RWPE1 (cell line): ENCODE measurements at regions of chr18 and their contacts with region 1.

Region 1: DNA sequence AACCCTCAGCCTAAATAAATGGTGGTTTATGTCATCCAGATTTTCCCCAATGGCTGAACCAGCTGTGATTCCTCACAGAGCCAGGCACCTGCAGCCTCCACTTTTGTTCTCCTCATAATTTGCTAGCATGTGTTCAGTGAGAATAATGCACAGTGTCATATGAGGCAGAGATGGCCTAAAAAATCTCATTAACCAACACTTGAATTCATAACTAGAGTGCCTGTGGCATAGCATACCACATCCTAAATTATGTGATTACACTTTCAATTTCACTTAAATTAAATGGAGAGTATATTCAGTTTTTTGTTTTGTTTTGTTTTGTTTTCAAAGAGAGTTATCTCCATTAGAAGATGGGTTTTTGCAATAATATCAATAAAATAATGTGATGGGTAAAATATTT is 488.0 kb downstream of the CBLN2 start:
- DNase-seq: no peak
- H3K27ac ChIP-seq: no peak overlapping the region
- CTCF ChIP-seq: no peak

Region 2: DNA sequence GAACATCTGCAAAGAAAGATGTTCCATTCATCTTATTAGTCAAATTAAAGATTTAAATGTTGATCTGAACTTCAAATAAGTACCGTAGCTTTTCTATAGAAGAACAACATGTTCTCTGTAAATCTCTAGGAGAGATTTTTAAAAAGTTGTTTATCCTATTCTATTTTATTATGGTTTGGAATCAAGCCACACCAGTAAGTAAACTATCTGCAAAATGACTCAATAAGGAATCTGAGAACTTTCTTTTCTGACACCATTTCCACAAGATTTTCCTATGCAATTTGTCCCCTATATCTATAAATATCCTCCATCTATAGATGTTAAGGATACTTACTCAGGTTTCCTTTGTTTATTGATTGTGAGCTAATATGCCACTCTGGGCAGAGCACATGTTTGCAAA is 248.6 kb before region 1 on chr18:
- CTCF ChIA-PET with region 1: interaction called, 10 read pairs
- POLR2A ChIA-PET with region 1: no interaction called
- DNase-seq: no peak
- H3K27ac ChIP-seq: no peak overlapping the region
- CTCF ChIP-seq: no peak

Region 3: DNA sequence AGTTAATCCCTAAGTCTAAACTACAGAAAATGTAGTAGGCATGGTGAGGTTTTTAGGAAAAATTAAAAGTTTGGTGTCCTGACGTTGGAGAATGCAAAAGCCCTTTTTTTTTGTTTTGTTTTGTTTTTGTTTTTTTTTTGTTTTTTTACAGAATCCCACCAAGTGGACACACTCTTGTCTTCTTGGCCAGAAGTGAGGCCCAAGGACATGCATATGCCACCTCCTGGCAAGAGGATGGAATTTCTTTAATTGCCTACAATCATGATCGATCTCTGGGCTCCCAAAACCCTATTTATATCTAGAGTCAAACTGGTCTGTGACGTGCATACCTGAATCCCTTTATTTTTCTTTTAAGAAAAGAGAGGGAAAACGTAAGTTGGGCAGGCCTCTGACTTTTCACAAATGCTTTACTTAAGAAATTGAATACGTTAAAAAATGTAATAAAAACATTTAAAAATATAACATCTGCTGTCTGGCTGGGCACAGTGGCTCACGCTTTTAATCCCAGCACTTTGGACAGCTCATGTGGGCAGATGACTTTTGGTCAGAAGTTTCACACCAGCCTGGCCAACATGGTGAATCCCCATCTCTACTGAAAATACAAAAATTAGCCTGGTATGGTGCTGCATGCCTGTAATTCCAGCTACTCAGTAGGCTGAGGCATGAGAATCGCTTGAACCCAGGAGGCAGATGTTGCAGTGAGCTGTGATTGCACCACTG is 14.7 kb before region 1 on chr18:
- CTCF ChIA-PET with region 1: no interaction called
- POLR2A ChIA-PET with region 1: no interaction called
- DNase-seq: no peak
- H3K27ac ChIP-seq: no peak overlapping the region
- CTCF ChIP-seq: no peak

Region 4: DNA sequence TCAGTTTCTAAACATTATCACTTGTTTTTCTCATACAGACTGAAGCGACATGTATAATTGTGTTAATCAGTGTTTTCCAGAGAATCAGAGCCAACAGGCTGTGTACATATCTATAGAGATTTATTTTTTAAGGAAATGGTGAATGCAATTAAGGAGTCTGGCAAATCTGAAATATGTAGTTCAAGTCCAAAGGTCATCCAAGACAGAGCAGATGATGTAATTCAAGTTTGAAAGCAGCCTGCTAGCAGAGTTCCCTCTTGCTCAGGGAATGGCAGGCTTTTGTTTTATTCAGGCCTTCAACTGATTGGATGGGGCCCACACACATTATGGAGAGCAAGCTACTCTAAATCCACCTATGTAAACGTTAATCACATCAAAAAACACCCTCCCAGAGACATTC is 205.4 kb after region 1 on chr18:
- CTCF ChIA-PET with region 1: no interaction called
- POLR2A ChIA-PET with region 1: no interaction called
- DNase-seq: no peak
- H3K27ac ChIP-seq: no peak overlapping the region
- CTCF ChIP-seq: no peak